ENCODE measurements at regions of chr9 and their contacts with region 1.

Region 1: DNA sequence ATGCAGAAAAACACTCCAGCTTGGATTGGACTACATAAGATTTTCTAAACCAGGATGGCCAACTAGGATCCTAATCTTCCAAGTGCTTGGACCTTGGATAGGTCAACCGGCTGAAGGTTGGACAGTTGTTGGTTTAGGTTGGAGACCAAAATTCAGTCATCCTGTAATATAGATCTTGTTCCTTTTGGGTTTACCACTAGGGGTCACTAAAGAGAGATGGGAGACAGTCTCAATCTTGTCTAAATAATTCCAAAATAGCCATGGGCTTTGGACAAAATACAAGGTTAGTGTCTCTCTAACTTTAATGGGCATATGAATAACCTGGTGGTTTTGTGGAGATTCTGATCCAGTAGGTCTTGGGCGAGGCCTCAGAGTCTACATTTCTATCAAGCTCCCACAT is 148.7 kb upstream of the ERCC6L2 start:
- DNase-seq: no peak
- ATAC-seq: peak; percentile 54 to 73
- H3K4me3 ChIP-seq: no peak overlapping the region
- H3K27ac ChIP-seq: no peak overlapping the region
- H3K4me1 ChIP-seq: no peaks in the 10 kb centered on the region
- H3K27me3 ChIP-seq: no peaks in the 10 kb centered on the region

Region 2: GRCh38 chr9:95181226-95181818 is 545.4 kb before region 1 on chr9:
- intact Hi-C with region 1: no loop called
- DNase-seq: no peak
- ATAC-seq: no peak
- H3K4me3 ChIP-seq: no peak overlapping the region
- H3K27ac ChIP-seq: no peak overlapping the region
- H3K4me1 ChIP-seq: no peaks in the 10 kb centered on the region
- H3K27me3 ChIP-seq: no peaks in the 10 kb centered on the region

Region 3: DNA sequence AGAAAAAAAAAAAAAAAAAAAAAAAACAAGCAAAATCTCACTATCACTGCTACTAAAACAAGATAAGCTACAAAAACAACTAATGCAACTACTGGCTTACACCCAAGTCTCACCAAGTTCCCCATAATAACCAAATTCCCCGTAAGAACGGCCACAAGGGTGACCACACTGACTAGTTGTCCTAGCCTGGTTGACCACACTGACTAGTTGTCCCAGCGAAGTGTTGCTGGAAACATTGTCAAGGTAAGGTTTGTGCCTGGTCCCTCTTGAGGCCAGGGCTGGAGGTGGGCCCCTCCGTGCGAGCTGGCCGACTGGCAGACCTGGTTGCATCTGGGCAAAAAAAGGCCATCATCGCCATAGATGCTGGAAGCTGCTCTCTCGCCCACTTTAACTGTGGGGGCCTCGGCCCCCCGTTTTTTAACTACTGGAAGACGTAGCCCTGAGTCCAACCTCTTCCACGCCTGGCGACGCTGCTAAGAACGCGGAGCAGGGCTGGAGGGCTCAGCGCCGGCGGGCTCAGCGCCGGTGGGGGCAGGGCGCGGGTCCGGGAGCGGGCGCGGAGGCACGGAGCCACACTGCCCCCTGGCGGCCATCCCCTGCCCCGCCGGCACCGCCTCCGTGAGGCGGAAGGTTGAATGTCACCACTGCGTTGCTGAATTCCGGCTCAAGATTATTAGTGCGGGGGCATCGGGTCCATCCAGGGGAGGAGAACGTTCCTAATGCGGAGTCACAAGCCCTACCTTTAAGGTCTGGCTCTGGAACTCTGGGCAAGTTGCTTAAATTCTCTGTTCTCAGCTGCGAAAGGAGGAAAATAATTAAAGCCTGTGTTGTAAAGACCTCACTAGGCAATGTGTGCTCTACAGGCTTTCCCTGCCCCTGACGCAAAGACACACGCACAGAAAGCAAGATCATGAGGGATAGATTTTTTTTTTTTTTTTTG is 491.3 kb after region 1 on chr9:
- intact Hi-C with region 1: loop called in 2 of 4 experiments (anchors 5 to 10 kb)
- DNase-seq: peak; percentile 77 to 94 (median 92)
- ATAC-seq: peak; percentile 91 to 95
- H3K4me3 ChIP-seq: peak overlapping the region; percentile 4
- H3K27ac ChIP-seq: no peak overlapping the region
- H3K4me1 ChIP-seq: no peaks in the 10 kb centered on the region
- H3K27me3 ChIP-seq: no peaks in the 10 kb centered on the region